Aorta (tissue), 5 donors: ENCODE measurements at regions of chr3 and their contacts with region 1.

Region 1: DNA sequence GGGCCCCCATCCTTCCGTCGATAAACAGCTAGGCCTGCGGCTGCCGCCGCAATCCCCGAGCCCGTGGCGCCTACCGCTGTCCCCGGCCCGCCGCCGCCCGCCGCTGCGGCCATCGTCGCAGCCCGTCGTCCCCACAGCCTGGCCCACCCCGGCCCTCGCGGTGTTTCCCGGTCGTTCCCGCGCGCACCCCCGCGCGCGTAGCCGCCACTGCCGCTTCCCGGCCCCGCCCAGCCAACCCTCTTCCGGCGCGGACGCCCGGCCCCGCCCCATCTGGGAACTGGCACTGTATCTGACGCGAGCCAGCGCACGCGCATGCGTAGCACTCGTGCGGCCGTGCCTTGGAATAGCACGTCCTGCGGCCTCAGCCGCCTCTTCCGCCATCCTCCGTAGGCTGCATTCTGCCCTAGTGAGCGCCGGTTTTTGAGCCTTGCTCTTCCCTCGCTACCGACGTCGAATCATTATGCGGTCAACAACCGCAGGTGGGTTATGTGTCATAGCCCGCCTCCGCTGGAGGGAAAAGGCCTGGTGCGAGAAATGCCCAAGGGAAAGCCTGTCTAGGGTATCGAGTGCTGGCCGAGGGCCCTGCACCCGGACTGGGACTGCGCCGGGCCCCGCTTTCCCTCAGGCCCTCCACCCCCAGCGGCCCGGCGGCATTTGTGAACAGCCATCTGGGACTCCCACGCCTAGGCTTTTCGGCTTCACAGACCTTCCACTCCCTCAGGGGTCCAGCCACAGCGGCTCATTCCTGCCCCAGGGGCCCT is at the start of gene SMARCC1:
- DNase-seq: peak; percentile 99 to 100
- ATAC-seq: peak; percentile 99
- H3K4me3 ChIP-seq: peak within 1 kb of the TSS; percentile 83
- H3K27ac ChIP-seq: peak within 1 kb of the TSS; percentile 85 to 98
- H3K4me1 ChIP-seq: no peaks in the 10 kb centered on the region
- H3K27me3 ChIP-seq: no peaks in the 10 kb centered on the region
- total RNA-seq, gene SMARCC1: 65.3 to 66.8 TPM

Region 2: DNA sequence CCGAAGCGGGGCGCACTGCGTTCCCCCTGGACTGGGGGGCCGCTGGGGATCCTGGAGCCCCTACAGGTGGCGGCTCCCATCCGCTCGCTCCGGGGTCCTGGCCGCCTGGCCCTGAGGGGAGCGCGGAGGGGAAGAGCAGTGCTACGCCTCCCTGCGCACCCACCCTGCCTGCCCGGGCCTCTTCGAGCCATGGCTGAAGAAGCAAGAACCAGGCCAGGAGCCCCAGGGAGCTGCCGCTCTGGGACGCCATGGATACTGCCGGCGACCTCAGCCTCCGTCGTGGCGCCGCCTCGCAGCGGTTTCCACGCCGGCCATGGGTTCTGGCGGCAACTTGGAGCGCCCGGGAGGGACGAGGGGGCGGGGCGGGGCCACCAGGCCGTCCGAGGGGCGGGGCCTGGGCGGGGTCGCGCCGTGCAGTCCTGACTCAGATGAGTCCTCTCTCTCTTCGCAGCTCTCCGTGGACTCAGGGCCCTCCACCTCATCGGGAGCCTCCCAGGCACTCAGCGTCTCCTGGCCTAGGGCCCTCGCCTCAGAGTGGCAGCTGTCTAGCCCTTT is 969.6 kb before region 1 on chr3:
- intact Hi-C with region 1: no loop called
- DNase-seq: peak; percentile 82 to 92
- ATAC-seq: peak; percentile 89
- H3K4me3 ChIP-seq: peak overlapping the region; percentile 22 to 35
- H3K27ac ChIP-seq: no peak overlapping the region
- H3K4me1 ChIP-seq: no peaks in the 10 kb centered on the region
- H3K27me3 ChIP-seq: no peaks in the 10 kb centered on the region

Region 3: DNA sequence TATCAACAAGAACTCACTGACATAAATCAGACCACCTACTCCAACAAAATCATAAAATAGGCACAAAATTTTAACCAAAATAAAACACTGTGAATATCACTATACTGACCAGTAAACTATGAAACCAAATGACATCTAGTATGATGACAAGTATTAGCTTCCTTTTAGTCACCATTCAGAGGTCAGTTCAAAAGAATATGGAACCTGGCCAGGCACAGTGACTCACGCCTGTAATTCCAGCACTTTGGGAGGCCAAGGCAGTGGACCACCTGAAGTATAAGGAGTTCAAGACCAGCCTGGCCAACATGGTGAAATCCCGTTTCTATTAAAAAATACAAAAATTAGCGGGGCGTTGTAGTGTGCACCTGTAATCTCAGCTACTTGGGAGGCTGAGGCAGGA is 65.9 kb before region 1 on chr3:
- intact Hi-C with region 1: loop called in 1 of 2 experiments (anchors 10 kb)
- DNase-seq: peak in 1 of 2 donors; percentile 59
- ATAC-seq: no peak
- H3K4me3 ChIP-seq: no peak overlapping the region
- H3K27ac ChIP-seq: no peak overlapping the region
- H3K4me1 ChIP-seq: no peaks in the 10 kb centered on the region
- H3K27me3 ChIP-seq: no peaks in the 10 kb centered on the region